T-cell (primary cell): ENCODE measurements at regions of chr2 and their contacts with region 1.

Region 1: GRCh38 chr2:99141110-99142108 is at the start of gene C2orf15:
- DNase-seq: peak; percentile 90 to 98 (median 94)
- ATAC-seq: peak; percentile 88 to 92 (median 89)
- H3K4me3 ChIP-seq: peak within 1 kb of the TSS; percentile 92 to 98
- H3K4me3 Mint-ChIP-seq: peak within 1 kb of the TSS; percentile 87 to 95 (median 94)
- H3K27ac ChIP-seq: peak within 1 kb of the TSS; percentile 95
- H3K27ac Mint-ChIP-seq: peak within 1 kb of the TSS; percentile 95 to 97
- H3K4me1 ChIP-seq: peaks cover 11 to 14% of the 10 kb centered on the region in 2 experiments
- H3K4me1 Mint-ChIP-seq: peaks cover 10 to 24% (median 19%) of the 10 kb centered on the region in 3 donors
- H3K27me3 ChIP-seq: no peaks in the 10 kb centered on the region
- H3K27me3 Mint-ChIP-seq: no peaks in the 10 kb centered on the region
- total RNA-seq, gene C2orf15: 2.1 to 3.1 (median 2.3) TPM

Region 2: GRCh38 chr2:99085421-99085820 is 56.0 kb before region 1 on chr2:
- CTCF ChIA-PET with region 1: no interaction called
- POLR2A ChIA-PET with region 1: no interaction called
- DNase-seq: peak in 5 of 35 experiments; percentile 1 to 26 (median 4)
- ATAC-seq: peak in 1 of 4 experiments; percentile 43
- H3K4me3 ChIP-seq: no peak overlapping the region
- H3K4me3 Mint-ChIP-seq: no peak overlapping the region
- H3K27ac ChIP-seq: no peak overlapping the region
- H3K27ac Mint-ChIP-seq: no peak overlapping the region
- H3K4me1 ChIP-seq: peaks cover 0 to 3% of the 10 kb centered on the region in 2 experiments
- H3K4me1 Mint-ChIP-seq: peaks cover 0 to 8% (median 6%) of the 10 kb centered on the region in 3 donors
- H3K27me3 ChIP-seq: peaks cover 0 to 12% of the 10 kb centered on the region in 2 experiments
- H3K27me3 Mint-ChIP-seq: peaks cover 5 to 6% of the 10 kb centered on the region in 2 donors

Region 3: DNA sequence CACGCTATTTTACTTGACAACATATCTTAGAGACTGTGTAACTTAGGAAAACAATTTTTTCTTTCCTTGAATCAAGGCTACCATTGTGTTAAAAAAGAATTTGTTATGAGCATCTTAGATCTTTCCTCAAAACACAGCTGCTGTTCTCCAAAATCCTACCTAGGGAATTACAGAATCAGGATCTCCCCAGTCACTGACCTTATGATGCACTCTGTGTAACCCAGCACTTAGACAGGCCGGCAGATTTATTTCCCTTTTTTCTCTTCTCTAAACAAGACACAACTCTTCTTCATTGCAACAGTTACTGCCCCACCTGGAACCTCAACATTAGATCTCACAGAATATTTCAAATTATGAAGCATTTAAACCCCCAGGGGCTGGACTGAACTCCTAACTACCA is 13.4 kb before region 1 on chr2:
- CTCF ChIA-PET with region 1: no interaction called
- POLR2A ChIA-PET with region 1: no interaction called
- DNase-seq: no peak
- ATAC-seq: no peak
- H3K4me3 ChIP-seq: no peak overlapping the region
- H3K4me3 Mint-ChIP-seq: no peak overlapping the region
- H3K27ac ChIP-seq: no peak overlapping the region
- H3K27ac Mint-ChIP-seq: no peak overlapping the region
- H3K4me1 ChIP-seq: no peaks in the 10 kb centered on the region
- H3K4me1 Mint-ChIP-seq: no peaks in the 10 kb centered on the region
- H3K27me3 ChIP-seq: no peaks in the 10 kb centered on the region
- H3K27me3 Mint-ChIP-seq: no peaks in the 10 kb centered on the region

Region 4: GRCh38 chr2:99154643-99155536 is 13.5 kb after region 1 on chr2 and contains the starts of genes LIPT1 and TSGA10:
- CTCF ChIA-PET with region 1: interaction called in 1 of 2 experiments, 13 read pairs
- POLR2A ChIA-PET with region 1: interaction called, 13 to 14 read pairs
- DNase-seq: peak; percentile 80 to 96 (median 89)
- ATAC-seq: peak; percentile 96 to 99 (median 97)
- H3K4me3 ChIP-seq: peak within 1 kb of the TSS; percentile 80 to 95
- H3K4me3 Mint-ChIP-seq: no peak within 1 kb of the TSS
- H3K27ac ChIP-seq: peak within 1 kb of the TSS; percentile 94
- H3K27ac Mint-ChIP-seq: peak within 1 kb of the TSS; percentile 89 to 91
- H3K4me1 ChIP-seq: peaks cover 11 to 19% of the 10 kb centered on the region in 2 experiments
- H3K4me1 Mint-ChIP-seq: peaks cover 37 to 44% (median 39%) of the 10 kb centered on the region in 3 donors
- H3K27me3 ChIP-seq: no peaks in the 10 kb centered on the region
- H3K27me3 Mint-ChIP-seq: no peaks in the 10 kb centered on the region
- total RNA-seq, gene LIPT1: 12.4 to 17.6 (median 13.7) TPM
- total RNA-seq, gene TSGA10: 14.0 to 16.2 (median 15.8) TPM

Region 5: DNA sequence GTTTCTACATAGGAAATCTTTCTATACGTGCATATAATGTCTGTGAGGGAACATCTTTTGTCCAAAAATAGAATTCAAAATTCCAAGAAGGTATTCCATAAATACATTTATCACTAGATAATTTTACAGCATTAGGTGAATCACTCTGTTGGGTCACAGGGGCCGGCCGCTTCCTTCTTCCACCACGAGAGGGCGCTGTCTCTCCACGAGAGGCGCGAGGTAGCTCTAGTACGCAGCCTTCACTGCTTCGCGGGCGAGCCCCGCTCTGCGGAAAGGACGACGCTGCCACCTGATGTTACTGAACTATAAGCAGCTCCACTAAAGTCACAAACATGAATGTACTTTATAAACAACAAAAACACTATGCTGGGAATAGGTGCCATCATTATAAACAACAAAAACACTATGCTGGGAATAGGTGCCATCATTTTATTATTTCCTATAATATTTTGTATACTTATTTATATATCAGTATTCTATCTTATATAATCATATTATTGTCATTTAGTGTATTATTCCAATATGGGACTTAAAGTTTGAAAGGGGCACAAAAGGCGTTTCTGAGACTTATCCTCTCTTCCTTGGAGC is 417.8 kb after region 1 on chr2:
- CTCF ChIA-PET with region 1: no interaction called
- POLR2A ChIA-PET with region 1: no interaction called
- DNase-seq: peak; percentile 52 to 87 (median 78)
- ATAC-seq: peak; percentile 91 to 97 (median 94)
- H3K4me3 ChIP-seq: no peak overlapping the region
- H3K4me3 Mint-ChIP-seq: no peak overlapping the region
- H3K27ac ChIP-seq: no peak overlapping the region
- H3K27ac Mint-ChIP-seq: no peak overlapping the region
- H3K4me1 ChIP-seq: no peaks in the 10 kb centered on the region
- H3K4me1 Mint-ChIP-seq: peaks cover 2 to 5% (median 3%) of the 10 kb centered on the region in 3 donors
- H3K27me3 ChIP-seq: no peaks in the 10 kb centered on the region
- H3K27me3 Mint-ChIP-seq: no peaks in the 10 kb centered on the region